Right ventricle myocardium inferior (tissue), 1 donor: ENCODE measurements at regions of chr11 and their contacts with region 1.

Region 1: GRCh38 chr11:46367244-46367915 is 14.1 kb upstream of the MDK start:
- DNase-seq: peak; percentile 91
- ATAC-seq: peak; percentile 63

Region 2: GRCh38 chr11:46210133-46210636 is 157.2 kb before region 1 on chr11:
- intact Hi-C with region 1: no loop called
- DNase-seq: no peak
- ATAC-seq: no peak

Region 3: DNA sequence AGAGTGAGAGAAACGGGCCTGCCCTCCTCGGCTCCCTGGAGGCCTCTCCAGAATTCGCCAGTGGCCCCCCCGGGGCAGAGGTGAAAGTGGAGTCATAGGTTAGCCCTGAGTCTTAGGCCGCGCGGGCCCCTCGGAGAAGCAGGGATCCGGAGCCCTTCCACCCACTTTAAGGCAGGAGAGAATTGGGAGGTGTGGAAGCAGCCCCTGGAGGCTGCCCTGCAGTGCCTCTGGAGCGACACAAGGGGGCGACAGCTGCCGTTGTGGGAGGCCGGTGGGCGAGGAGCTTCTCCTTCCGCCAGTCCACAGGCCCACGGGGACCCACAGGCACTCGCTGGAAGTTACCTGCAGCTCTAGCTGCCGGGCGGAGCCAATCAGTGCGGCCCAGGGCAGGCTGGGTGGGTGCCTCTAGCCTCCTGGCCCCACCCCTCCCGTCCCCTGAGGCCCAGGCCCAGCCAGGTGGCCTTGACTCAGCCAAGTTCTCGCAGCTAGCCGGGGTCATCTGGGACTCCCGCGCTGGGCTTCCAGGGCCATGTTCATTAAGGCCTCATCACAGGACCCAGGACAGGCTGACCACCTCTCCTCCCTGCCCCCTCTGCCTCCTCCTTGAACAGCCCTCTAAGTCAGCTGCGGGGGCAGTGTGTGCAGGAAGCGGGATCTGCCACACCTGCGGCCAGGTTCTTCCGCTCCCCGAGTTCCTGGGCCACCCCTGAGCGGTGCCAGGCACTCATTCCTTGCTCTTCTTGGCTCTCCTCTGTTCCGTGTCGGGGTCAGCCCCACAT is 15.1 kb before region 1 on chr11:
- intact Hi-C with region 1: loop called (anchors 2 kb)
- DNase-seq: peak; percentile 77
- ATAC-seq: peak; percentile 20